ENCODE measurements at regions of chr9 and their contacts with region 1.

Region 1: GRCh38 chr9:70563431-70564204 is 149.2 kb upstream of the KLF9 start:
- H3K4me3 Mint-ChIP-seq: peak overlapping the region; percentile 50
- H3K27ac Mint-ChIP-seq: peak overlapping the region; percentile 90
- H3K4me1 Mint-ChIP-seq: peaks cover 51% of the 10 kb centered on the region
- H3K27me3 Mint-ChIP-seq: no peaks in the 10 kb centered on the region

Region 2: DNA sequence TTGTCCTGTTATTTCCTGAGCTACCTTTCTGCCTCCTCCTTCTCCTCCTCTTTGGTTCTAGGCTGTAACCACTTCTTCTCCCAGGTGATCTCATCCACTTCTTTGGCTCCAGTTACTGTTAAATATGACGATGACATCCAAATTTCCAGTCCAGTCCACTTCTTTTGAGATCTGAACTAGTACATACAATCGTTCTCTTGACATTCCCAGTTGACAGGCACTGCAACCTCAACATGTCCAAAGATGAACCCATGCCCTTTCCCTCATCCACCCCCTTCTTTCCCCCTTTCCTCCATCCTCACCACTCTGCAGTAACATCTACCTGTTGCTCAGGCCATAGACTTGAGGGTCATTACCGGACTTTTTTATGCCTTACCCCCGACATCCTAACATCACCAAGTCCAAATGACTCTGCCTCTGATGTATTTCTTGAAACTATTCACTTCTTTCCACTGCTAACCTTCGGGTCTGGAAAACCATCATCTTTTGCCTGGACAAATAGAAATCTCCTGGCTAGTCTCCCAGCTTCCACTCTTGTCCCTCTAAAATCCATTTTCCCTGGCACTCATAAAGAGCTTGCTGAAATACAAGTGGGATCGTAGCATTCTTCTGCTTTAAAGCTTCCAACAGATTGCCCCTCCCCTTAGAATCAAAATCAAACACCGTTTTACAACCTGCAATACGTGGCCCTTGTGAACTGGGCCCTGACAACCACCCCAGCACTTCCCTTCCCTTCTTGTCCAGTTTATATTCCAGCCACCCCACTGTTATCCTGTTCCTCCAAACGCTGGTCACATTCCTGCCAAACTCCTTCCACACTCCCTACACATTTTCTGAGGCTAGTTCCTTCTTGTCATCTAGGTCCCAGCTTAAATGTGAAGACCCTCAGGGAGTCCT is 180.7 kb before region 1 on chr9:
- intact Hi-C with region 1: no loop called
- H3K4me3 Mint-ChIP-seq: no peak overlapping the region
- H3K27ac Mint-ChIP-seq: no peak overlapping the region
- H3K4me1 Mint-ChIP-seq: no peaks in the 10 kb centered on the region
- H3K27me3 Mint-ChIP-seq: no peaks in the 10 kb centered on the region

Region 3: GRCh38 chr9:70419546-70420266 is 143.9 kb before region 1 on chr9:
- intact Hi-C with region 1: loop called (anchors 1 kb)
- H3K4me3 Mint-ChIP-seq: peak overlapping the region; percentile 92
- H3K27ac Mint-ChIP-seq: peak overlapping the region; percentile 96
- H3K4me1 Mint-ChIP-seq: peaks cover 49% of the 10 kb centered on the region
- H3K27me3 Mint-ChIP-seq: no peaks in the 10 kb centered on the region

Region 4: GRCh38 chr9:70577671-70578070 is 14.1 kb after region 1 on chr9:
- intact Hi-C with region 1: loop called (anchors 2 kb)
- H3K4me3 Mint-ChIP-seq: no peak overlapping the region
- H3K27ac Mint-ChIP-seq: no peak overlapping the region
- H3K4me1 Mint-ChIP-seq: peaks cover 53% of the 10 kb centered on the region
- H3K27me3 Mint-ChIP-seq: no peaks in the 10 kb centered on the region

Measured in dendritic cell treated with granulocyte-macrophage colony-stimulating factor and Interleukin-4, amounts not matched to agents 40 ng/mL and 50 ng/mL, for 4 days (primary cell).